Caco-2 (cell line): ENCODE measurements at regions of chr4 and their contacts with region 1.

Region 1: GRCh38 chr4:124712372-124713184 is at the start of gene ANKRD50:
- DNase-seq: peak; percentile 90
- H3K4me3 ChIP-seq: peak within 1 kb of the TSS; percentile 82
- H3K4me3 Mint-ChIP-seq: no peak within 1 kb of the TSS
- H3K27ac Mint-ChIP-seq: no peak within 1 kb of the TSS
- H3K4me1 ChIP-seq: peaks cover 9% of the 10 kb centered on the region
- H3K4me1 Mint-ChIP-seq: no peaks in the 10 kb centered on the region
- H3K27me3 ChIP-seq: no peaks in the 10 kb centered on the region
- H3K27me3 Mint-ChIP-seq: no peaks in the 10 kb centered on the region
- CTCF ChIP-seq: no peak
- total RNA-seq, gene ANKRD50: 7.0 and 7.7 TPM in 2 replicates

Region 2: DNA sequence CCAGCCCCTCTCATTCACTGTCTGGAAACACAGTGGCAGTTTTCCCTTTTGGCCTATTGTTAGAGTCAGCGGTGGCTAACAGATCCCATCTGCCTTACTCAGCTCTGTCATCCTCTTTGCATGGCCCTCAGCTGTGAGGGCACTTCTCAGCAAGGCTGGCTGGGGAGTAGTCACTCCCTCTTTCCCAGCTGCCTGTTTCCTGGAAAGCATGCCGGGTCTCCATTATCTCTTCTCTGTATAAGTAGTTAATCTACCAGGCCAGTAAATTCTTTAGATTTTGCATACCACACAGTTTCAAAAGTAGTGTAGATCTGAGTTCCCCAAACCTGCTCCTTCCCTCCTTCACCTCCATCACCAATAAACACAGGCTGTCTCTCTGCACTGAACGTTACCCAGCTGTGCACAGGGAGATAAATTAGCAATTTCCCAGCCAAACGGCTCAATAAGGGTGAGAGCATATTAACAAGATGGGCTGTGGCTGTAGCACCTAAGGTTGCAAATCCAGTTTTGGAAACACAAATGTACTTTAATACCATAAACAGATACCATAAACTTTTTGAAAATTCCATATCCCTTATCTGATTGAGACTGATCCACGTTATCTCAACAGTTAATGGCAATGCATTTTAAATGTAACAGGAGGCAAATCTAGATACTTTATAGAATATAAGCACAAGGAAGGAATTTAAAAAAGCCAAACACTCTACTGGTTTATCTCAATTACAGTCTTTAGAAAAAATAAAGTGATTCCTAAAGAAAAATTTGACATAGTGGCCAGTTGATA is 229.3 kb before region 1 on chr4:
- CTCF ChIA-PET with region 1: no interaction called
- POLR2A ChIA-PET with region 1: no interaction called
- intact Hi-C with region 1: loop called (anchors 5 kb)
- DNase-seq: peak; percentile 43 to 55
- H3K4me3 ChIP-seq: no peak overlapping the region
- H3K4me3 Mint-ChIP-seq: peak overlapping the region; percentile 1
- H3K27ac Mint-ChIP-seq: peak overlapping the region; percentile 20
- H3K4me1 ChIP-seq: peaks cover 23% of the 10 kb centered on the region
- H3K4me1 Mint-ChIP-seq: peaks cover 9% of the 10 kb centered on the region
- H3K27me3 ChIP-seq: no peaks in the 10 kb centered on the region
- H3K27me3 Mint-ChIP-seq: no peaks in the 10 kb centered on the region
- CTCF ChIP-seq: no peak

Region 3: DNA sequence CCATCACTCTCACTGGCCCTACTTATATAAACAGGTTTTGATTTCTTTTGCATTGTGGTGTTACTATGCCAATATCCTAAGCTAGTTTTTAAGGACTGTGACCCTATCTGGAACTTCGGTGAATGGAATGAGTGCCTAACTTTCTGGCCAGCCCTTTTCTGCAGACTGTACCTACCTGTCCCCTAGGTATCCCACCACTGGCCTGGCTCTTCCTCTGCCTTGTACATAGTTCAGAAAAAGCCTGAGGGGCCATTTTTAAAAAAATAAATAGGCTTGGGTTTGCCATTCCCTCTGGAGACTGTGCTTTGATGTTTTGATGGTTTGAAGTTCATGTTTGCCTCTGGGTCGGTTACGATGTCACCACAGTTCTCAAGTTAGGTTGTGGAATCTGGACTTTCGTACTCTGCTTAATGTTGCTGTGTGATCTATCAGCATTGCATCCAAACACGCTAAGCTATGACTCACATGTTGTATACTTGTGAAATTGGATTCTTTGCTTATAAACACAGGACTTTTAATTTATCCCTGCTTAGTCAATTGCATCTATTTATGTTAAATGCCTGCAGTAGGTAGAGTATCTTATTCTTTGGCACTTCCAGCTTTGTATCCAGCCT is 182.0 kb before region 1 on chr4:
- CTCF ChIA-PET with region 1: no interaction called
- POLR2A ChIA-PET with region 1: no interaction called
- intact Hi-C with region 1: loop called (anchors 1 kb)
- DNase-seq: peak; percentile 63 to 69
- H3K4me3 ChIP-seq: no peak overlapping the region
- H3K4me3 Mint-ChIP-seq: no peak overlapping the region
- H3K27ac Mint-ChIP-seq: peak overlapping the region; percentile 71
- H3K4me1 ChIP-seq: peaks cover 24% of the 10 kb centered on the region; the same call in 1 of the 2 replicates
- H3K4me1 Mint-ChIP-seq: peaks cover 6% of the 10 kb centered on the region
- H3K27me3 ChIP-seq: no peaks in the 10 kb centered on the region
- H3K27me3 Mint-ChIP-seq: no peaks in the 10 kb centered on the region
- CTCF ChIP-seq: no peak

Region 4: GRCh38 chr4:124641715-124642381 is 70.7 kb before region 1 on chr4:
- CTCF ChIA-PET with region 1: no interaction called
- POLR2A ChIA-PET with region 1: no interaction called
- intact Hi-C with region 1: loop called (anchors 5 kb)
- DNase-seq: no peak
- H3K4me3 ChIP-seq: no peak overlapping the region
- H3K4me3 Mint-ChIP-seq: no peak overlapping the region
- H3K27ac Mint-ChIP-seq: no peak overlapping the region
- H3K4me1 ChIP-seq: no peaks in the 10 kb centered on the region
- H3K4me1 Mint-ChIP-seq: no peaks in the 10 kb centered on the region
- H3K27me3 ChIP-seq: no peaks in the 10 kb centered on the region
- H3K27me3 Mint-ChIP-seq: no peaks in the 10 kb centered on the region
- CTCF ChIP-seq: no peak